Endothelial cell of umbilical vein (primary cell): ENCODE measurements at regions of chr10 and their contacts with region 1.

Region 1: GRCh38 chr10:68406815-68407548 is at the start of gene RUFY2:
- DNase-seq: peak; percentile 79
- H3K4me3 ChIP-seq: peak within 1 kb of the TSS; percentile 67 to 93 (median 88)
- H3K27ac ChIP-seq: peak within 1 kb of the TSS; percentile 50
- H3K4me1 ChIP-seq: peaks cover 6% of the 10 kb centered on the region
- H3K27me3 ChIP-seq: no peaks in the 10 kb centered on the region
- CTCF ChIP-seq: peak; percentile 53 to 91
- POLR2A ChIP-seq: peak; percentile 45
- total RNA-seq, gene RUFY2: 24.2 and 26.1 TPM in 2 replicates

Region 2: DNA sequence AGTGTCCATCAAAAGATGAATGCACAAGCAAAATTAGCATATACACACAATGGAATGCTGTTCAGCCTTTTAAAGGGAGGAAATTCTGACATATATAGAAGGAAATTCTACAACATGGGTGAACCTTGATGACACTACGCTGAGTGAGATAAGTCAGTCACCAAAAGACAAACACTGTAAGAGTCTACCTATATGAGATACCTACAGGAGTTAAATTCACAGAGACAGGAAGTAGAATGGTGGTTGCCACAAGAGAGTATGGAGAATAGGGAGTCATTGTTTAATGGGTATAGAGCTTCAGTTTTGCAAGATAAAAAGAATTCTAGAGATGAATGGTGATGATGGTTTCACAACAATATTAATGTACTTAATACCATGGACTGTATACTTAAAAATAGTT is 383.7 kb before region 1 on chr10:
- CTCF ChIA-PET with region 1: no interaction called
- POLR2A ChIA-PET with region 1: no interaction called
- dilution Hi-C with region 1: no loop called
- intact Hi-C with region 1: no loop called
- DNase-seq: no peak
- H3K4me3 ChIP-seq: no peak overlapping the region
- H3K27ac ChIP-seq: no peak overlapping the region
- H3K4me1 ChIP-seq: no peaks in the 10 kb centered on the region
- H3K27me3 ChIP-seq: no peaks in the 10 kb centered on the region
- CTCF ChIP-seq: no peak
- POLR2A ChIP-seq: no peak

Region 3: GRCh38 chr10:68419376-68419775 is 12.4 kb after region 1 on chr10:
- CTCF ChIA-PET with region 1: interaction called, 10 read pairs
- POLR2A ChIA-PET with region 1: no interaction called
- dilution Hi-C with region 1: no loop called
- intact Hi-C with region 1: no loop called
- DNase-seq: no peak
- H3K4me3 ChIP-seq: no peak overlapping the region
- H3K27ac ChIP-seq: no peak overlapping the region
- H3K4me1 ChIP-seq: no peaks in the 10 kb centered on the region
- H3K27me3 ChIP-seq: no peaks in the 10 kb centered on the region
- CTCF ChIP-seq: no peak
- POLR2A ChIP-seq: no peak

Region 4: GRCh38 chr10:68471586-68472408 is 64.8 kb after region 1 on chr10 and contains the start of gene DNA2:
- CTCF ChIA-PET with region 1: interaction called, 4 read pairs
- POLR2A ChIA-PET with region 1: no interaction called
- dilution Hi-C with region 1: no loop called
- intact Hi-C with region 1: loop called (anchors 2 kb)
- DNase-seq: peak; percentile 82
- H3K4me3 ChIP-seq: peak within 1 kb of the TSS; percentile 80 to 99 (median 98)
- H3K27ac ChIP-seq: peak within 1 kb of the TSS; percentile 58
- H3K4me1 ChIP-seq: peaks cover 14% of the 10 kb centered on the region
- H3K27me3 ChIP-seq: no peaks in the 10 kb centered on the region
- CTCF ChIP-seq: no peak
- POLR2A ChIP-seq: peak; percentile 61
- total RNA-seq, gene DNA2: 18.1 and 18.2 TPM in 2 replicates